PC-3 (cell line): ENCODE measurements at regions of chr3 and their contacts with region 1.

Region 1: GRCh38 chr3:119206611-119207511 is 33.5 kb downstream of the UPK1B start:
- DNase-seq: peak; percentile 50
- ATAC-seq: peak; percentile 80
- H3K4me3 ChIP-seq: no peak overlapping the region
- H3K27ac ChIP-seq: no peak overlapping the region
- H3K4me1 ChIP-seq: no peaks in the 10 kb centered on the region
- H3K27me3 ChIP-seq: no peaks in the 10 kb centered on the region
- CTCF ChIP-seq: peak; percentile 48

Region 2: DNA sequence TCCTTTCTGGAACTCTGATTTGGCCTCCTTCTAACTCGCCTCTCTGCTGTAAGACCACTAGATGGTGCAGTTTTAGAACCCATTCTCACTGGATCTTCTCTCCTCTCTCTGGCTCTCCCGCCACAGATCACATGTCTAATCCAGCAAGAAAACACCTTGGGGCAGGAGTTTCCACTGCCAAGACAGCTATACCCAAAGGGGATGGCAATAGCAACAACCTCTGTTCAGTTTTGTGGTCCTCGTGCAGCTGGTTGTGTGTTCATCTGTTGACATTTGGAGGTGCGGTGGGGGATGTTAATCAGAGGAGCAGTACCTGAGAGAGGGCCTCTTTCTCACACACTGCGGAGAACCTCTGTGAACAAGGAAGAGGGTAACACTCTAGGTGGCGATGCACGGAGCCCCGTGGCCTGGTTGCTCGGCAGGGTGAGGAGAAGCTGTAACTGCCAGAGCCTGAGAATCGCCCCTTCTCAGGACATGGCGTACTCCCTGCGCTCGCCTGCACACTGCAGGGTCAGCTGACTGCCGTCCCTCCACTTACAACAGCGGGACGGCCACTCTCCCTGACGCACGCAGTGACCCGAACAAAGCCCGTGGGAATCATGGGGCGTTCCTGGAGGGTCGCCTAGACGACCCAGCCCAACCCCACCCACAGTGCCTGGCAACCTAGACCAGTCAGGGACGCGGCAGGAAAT is 61.2 kb before region 1 on chr3 and contains the start of gene TEX55:
- CTCF ChIA-PET with region 1: no interaction called
- POLR2A ChIA-PET with region 1: no interaction called
- intact Hi-C with region 1: loop called (anchors 1 kb)
- DNase-seq: peak; percentile 87
- ATAC-seq: peak; percentile 75
- H3K4me3 ChIP-seq: no peak within 1 kb of the TSS
- H3K27ac ChIP-seq: peak within 1 kb of the TSS; percentile 2; the same call in 1 of the 2 replicates
- H3K4me1 ChIP-seq: peaks cover 25% of the 10 kb centered on the region
- H3K27me3 ChIP-seq: no peaks in the 10 kb centered on the region
- CTCF ChIP-seq: peak; percentile 94
- total RNA-seq, gene TEX55: 0.33 TPM in 1 of 2 replicates, not detected in the other

Region 3: GRCh38 chr3:119184796-119185570 is 21.9 kb before region 1 on chr3:
- CTCF ChIA-PET with region 1: no interaction called
- POLR2A ChIA-PET with region 1: no interaction called
- intact Hi-C with region 1: loop called (anchors 1 kb)
- DNase-seq: peak; percentile 99
- ATAC-seq: peak; percentile 75
- H3K4me3 ChIP-seq: peak overlapping the region; percentile 51
- H3K27ac ChIP-seq: peak overlapping the region; percentile 98
- H3K4me1 ChIP-seq: peaks cover 74% of the 10 kb centered on the region
- H3K27me3 ChIP-seq: no peaks in the 10 kb centered on the region
- CTCF ChIP-seq: no peak

Region 4: GRCh38 chr3:119550192-119550910 is 343.5 kb after region 1 on chr3:
- CTCF ChIA-PET with region 1: no interaction called
- POLR2A ChIA-PET with region 1: no interaction called
- intact Hi-C with region 1: no loop called
- DNase-seq: no peak
- ATAC-seq: no peak
- H3K4me3 ChIP-seq: no peak overlapping the region
- H3K27ac ChIP-seq: no peak overlapping the region
- H3K4me1 ChIP-seq: no peaks in the 10 kb centered on the region
- H3K27me3 ChIP-seq: no peaks in the 10 kb centered on the region
- CTCF ChIP-seq: no peak

Region 5: DNA sequence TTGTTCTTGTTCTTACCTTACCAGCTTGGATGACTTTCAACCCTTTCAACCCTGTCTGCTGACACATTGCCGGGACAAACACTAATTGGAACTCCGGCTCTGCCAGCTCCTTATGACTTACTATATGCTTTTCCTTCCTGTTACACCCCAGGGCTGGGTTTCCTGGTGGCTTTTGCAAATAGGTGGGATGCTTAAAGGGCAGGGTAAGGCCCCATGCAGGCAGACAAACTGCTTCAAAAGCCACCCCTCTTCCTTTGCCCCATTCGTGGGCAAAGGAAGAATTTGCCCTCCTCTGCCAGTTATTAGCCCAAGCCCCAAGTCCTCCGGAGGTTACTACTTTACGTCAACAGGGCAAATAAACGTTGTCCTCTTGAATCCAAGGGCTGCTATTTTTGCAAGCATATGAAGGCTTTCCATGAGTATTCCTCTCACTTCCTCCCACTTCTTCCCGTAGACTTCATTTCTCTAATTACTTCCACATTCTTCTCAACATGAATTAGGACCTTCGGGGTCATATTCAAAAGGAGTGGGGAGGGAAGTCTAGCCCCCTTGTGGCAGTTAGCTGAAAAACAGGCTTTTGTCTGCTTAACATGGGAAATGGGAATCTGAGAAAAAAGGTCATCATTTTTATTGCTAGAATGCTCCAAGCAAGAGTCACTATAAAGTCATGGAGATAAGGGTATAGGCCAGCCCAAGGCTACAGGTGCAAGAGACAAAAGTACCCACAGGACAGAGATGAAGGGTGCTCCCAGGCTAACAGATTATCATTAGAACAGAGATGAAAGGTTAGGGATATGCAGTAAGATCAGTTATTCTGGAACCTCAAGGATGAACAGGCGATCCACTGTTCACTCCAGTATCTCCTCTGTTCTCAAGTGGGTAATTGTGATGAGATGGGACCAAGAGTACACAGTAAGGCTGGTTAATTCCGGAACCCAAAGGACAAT is 1300.2 kb after region 1 on chr3:
- CTCF ChIA-PET with region 1: no interaction called
- POLR2A ChIA-PET with region 1: no interaction called
- intact Hi-C with region 1: no loop called
- DNase-seq: peak; percentile 84
- ATAC-seq: peak; percentile 88
- H3K4me3 ChIP-seq: peak overlapping the region; percentile 33; the same call in 1 of the 2 replicates
- H3K27ac ChIP-seq: peak overlapping the region; percentile 72
- H3K4me1 ChIP-seq: peaks cover 22% of the 10 kb centered on the region
- H3K27me3 ChIP-seq: no peaks in the 10 kb centered on the region
- CTCF ChIP-seq: peak; percentile 94